ENCODE measurements at regions of chr10 and their contacts with region 1.

Region 1: DNA sequence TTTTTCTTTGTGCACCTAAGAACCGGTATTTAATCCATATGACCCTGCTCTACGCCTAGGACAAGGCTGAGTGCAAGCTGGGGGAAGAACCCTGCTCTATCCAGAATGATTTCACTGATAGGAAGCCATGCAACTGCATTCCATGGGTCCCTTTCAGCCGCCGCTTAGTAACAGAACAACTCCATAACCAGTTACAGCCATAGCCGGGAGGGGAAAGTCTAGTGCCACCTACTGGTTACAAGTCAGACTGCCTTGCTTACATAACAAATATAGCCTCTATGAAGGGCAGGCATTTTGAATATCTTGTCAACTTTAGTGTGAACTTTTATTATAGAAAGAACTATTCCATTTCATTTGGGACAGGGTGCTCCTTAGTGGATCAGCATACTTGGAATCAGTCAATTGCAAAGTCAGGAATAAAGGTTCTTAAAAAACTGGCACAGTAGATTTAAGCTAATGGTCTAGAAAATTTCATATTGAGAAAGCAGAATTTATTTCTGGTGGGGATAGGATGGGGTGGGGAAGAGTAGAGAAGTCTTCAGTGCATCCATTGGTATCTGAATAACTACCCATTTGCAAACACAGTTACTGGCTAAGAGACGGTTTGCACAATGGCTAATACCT is 521.7 kb downstream of the ADRA2A start:
- DNase-seq: peak; percentile 64
- ATAC-seq: peak; percentile 47
- H3K4me3 Mint-ChIP-seq: no peak overlapping the region
- H3K27ac Mint-ChIP-seq: no peak overlapping the region
- H3K4me1 Mint-ChIP-seq: no peaks in the 10 kb centered on the region
- H3K27me3 Mint-ChIP-seq: peaks cover 4% of the 10 kb centered on the region

Region 2: DNA sequence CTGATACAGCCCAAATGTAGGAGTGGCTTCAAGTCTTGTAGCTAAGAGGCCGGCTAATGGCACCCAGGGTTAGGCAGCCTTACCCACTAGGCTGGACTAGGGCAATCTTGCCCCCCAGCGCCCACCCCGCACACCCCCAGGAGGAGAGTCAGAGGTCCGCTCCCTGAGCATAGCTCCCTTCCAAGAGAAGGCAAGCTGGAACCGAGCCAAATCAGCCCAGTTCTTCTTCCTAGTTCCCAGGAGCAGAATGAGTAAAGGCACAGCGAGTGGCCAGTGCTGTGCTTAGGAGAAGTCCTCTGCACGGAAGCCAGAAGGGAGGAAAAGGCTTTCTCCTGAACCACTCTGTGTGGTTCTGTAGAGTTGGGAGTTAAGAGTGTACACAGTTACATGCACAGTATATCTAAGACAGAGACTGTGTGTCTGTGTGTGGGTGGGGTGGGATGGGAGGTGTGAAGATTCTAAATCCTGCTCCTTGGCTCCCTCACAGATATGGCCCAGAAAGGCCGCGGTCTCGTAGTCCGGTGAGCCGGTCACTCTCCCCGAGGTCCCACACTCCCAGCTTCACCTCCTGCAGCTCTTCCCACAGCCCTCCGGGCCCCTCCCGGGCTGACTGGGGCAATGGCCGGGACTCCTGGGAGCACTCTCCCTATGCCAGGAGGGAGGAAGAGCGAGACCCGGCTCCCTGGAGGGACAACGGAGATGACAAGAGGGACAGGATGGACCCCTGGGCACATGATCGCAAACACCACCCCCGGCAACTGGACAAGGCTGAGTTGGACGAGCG is 786.6 kb before region 1 on chr10:
- CTCF ChIA-PET with region 1: no interaction called
- POLR2A ChIA-PET with region 1: interaction called, 12 read pairs
- intact Hi-C with region 1: no loop called
- DNase-seq: no peak
- ATAC-seq: no peak
- H3K4me3 Mint-ChIP-seq: no peak overlapping the region
- H3K27ac Mint-ChIP-seq: no peak overlapping the region
- H3K4me1 Mint-ChIP-seq: peaks cover 21% of the 10 kb centered on the region
- H3K27me3 Mint-ChIP-seq: no peaks in the 10 kb centered on the region

Region 3: DNA sequence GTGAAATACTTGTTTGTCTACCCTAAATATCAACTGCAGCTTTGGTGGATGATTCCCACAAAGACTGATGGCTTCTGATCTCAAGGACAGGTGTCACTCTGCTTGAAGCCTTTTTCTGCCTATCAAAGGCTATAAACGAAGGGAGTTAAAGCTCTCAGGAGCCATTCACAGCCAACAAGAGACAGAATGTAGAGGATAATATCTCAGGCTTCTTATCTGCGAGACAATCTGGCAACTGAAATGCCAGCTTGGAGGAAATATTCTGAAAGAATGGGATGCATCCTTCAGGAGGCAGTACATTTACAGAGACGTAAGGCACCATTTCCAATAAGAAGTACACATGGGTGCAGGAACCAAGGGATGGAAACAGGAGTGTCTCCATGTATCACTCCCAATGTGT is 35.6 kb after region 1 on chr10:
- CTCF ChIA-PET with region 1: no interaction called
- POLR2A ChIA-PET with region 1: no interaction called
- intact Hi-C with region 1: no loop called
- DNase-seq: no peak
- ATAC-seq: no peak
- H3K4me3 Mint-ChIP-seq: no peak overlapping the region
- H3K27ac Mint-ChIP-seq: no peak overlapping the region
- H3K4me1 Mint-ChIP-seq: no peaks in the 10 kb centered on the region
- H3K27me3 Mint-ChIP-seq: no peaks in the 10 kb centered on the region